Posterior vena cava (tissue), 2 donors: ENCODE measurements at regions of chr5 and their contacts with region 1.

Region 1: GRCh38 chr5:9888501-9888901 is 258.4 kb upstream of the TAS2R1 start:
- DNase-seq: no peak

Region 2: GRCh38 chr5:9166202-9167112 is 722.0 kb before region 1 on chr5:
- intact Hi-C with region 1: no loop called
- DNase-seq: no peak

Region 3: DNA sequence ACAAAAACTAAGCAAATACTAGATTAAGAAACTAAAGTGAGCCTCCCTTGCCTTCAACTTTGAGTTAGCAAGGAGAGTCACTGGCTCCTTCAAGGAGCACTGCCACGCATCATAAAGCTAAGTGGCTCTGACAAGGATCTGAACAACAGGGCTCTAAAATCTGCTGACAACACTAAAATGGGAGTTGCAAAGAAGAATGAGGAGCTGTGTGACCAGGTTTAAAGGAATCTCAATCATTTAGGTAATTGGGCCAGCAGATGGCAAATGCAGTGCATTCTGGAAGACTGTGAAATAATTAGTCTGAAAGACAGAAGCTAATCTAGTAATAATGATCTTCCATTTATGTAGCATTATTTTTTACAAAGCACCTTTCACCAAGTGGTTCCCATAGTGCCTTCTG is 38.6 kb after region 1 on chr5:
- intact Hi-C with region 1: loop called in 1 of 2 experiments (anchors 2 kb)
- DNase-seq: no peak

Region 4: GRCh38 chr5:9951866-9952516 is 63.5 kb after region 1 on chr5:
- intact Hi-C with region 1: no loop called
- DNase-seq: no peak